Natural killer cell (primary cell): ENCODE measurements at regions of chr15 and their contacts with region 1.

Region 1: GRCh38 chr15:99076552-99077308 is 28.1 kb upstream of the SYNM start:
- DNase-seq: peak; percentile 21 to 80
- ATAC-seq: peak; percentile 71 to 92 (median 78)
- H3K4me3 ChIP-seq: peak overlapping the region; percentile 14
- H3K4me3 Mint-ChIP-seq: peak overlapping the region; percentile 77
- H3K27ac ChIP-seq: no peak overlapping the region
- H3K27ac Mint-ChIP-seq: peak overlapping the region in 1 of 2 donors; percentile 81
- H3K4me1 ChIP-seq: peaks cover 3% of the 10 kb centered on the region
- H3K4me1 Mint-ChIP-seq: peaks cover 9% of the 10 kb centered on the region in 2 donors
- H3K27me3 ChIP-seq: peaks cover 3% of the 10 kb centered on the region
- H3K27me3 Mint-ChIP-seq: peaks cover 13 to 29% of the 10 kb centered on the region in 2 donors
- CTCF ChIP-seq: peak; percentile 87

Region 2: GRCh38 chr15:98442379-98442833 is 634.3 kb before region 1 on chr15:
- intact Hi-C with region 1: loop called (anchors 5 kb)
- DNase-seq: peak; percentile 25 to 69
- ATAC-seq: peak; percentile 73 to 86 (median 78)
- H3K4me3 ChIP-seq: no peak overlapping the region
- H3K4me3 Mint-ChIP-seq: no peak overlapping the region
- H3K27ac ChIP-seq: no peak overlapping the region
- H3K27ac Mint-ChIP-seq: no peak overlapping the region
- H3K4me1 ChIP-seq: no peaks in the 10 kb centered on the region
- H3K4me1 Mint-ChIP-seq: peaks cover 7 to 11% of the 10 kb centered on the region in 2 donors
- H3K27me3 ChIP-seq: no peaks in the 10 kb centered on the region
- H3K27me3 Mint-ChIP-seq: peaks cover 6% of the 10 kb centered on the region in 2 donors
- CTCF ChIP-seq: peak; percentile 70

Region 3: GRCh38 chr15:98518823-98519561 is 557.7 kb before region 1 on chr15:
- intact Hi-C with region 1: loop called (anchors 5 kb)
- DNase-seq: peak; percentile 22 to 85
- ATAC-seq: peak; percentile 75 to 84 (median 81)
- H3K4me3 ChIP-seq: no peak overlapping the region
- H3K4me3 Mint-ChIP-seq: no peak overlapping the region
- H3K27ac ChIP-seq: no peak overlapping the region
- H3K27ac Mint-ChIP-seq: no peak overlapping the region
- H3K4me1 ChIP-seq: peaks cover 4% of the 10 kb centered on the region
- H3K4me1 Mint-ChIP-seq: peaks cover 5 to 6% of the 10 kb centered on the region in 2 donors
- H3K27me3 ChIP-seq: no peaks in the 10 kb centered on the region
- H3K27me3 Mint-ChIP-seq: peaks cover 0 to 7% of the 10 kb centered on the region in 2 donors
- CTCF ChIP-seq: peak; percentile 66

Region 4: DNA sequence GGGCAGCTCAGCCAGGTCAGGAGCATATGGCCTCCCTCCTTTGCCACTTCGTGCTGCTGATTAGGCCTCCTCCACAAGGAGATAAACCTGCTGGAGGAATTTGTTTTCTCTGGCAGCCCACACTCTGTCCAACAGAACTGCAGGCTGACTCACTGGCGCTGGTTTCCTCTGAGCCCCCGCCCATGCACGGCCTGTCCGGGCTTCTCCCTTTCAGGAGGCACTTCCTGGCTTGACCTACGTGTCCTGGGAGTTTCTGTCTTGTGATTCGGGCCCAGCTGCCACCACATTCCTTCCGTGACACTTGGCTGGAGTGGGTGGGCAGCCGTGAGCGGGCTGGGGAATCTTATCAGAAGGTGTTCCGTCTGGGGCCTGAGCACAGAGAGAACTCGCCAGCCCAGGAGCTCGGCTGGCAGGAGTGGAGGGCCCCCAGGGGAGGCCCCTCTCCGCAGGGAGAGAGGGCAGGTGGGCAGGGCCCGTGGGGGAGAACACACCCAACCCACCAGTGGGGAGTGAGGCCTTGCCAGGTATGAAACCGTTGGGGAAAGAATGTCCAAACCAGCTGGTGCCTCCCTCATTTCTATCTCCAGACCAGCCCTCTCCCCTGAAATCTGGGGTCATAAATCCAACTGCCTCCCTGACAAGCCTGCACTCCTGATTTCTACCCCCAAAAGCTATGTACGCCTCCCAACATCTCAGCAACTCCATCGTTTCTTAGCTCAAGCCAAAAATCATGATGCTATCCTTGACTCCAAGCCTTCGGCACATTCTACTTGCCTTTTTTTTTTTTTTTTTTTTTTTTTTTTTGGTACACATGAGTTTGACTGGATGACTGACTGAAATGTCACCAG is 378.4 kb after region 1 on chr15:
- intact Hi-C with region 1: no loop called
- DNase-seq: peak in 1 of 2 donors; percentile 14
- ATAC-seq: no peak
- H3K4me3 ChIP-seq: no peak overlapping the region
- H3K4me3 Mint-ChIP-seq: no peak overlapping the region
- H3K27ac ChIP-seq: no peak overlapping the region
- H3K27ac Mint-ChIP-seq: no peak overlapping the region
- H3K4me1 ChIP-seq: peaks cover 39% of the 10 kb centered on the region
- H3K4me1 Mint-ChIP-seq: peaks cover 7 to 28% of the 10 kb centered on the region in 2 donors
- H3K27me3 ChIP-seq: peaks cover 2% of the 10 kb centered on the region
- H3K27me3 Mint-ChIP-seq: peaks cover 4 to 11% of the 10 kb centered on the region in 2 donors
- CTCF ChIP-seq: no peak